Dendritic cell treated with granulocyte-macrophage colony-stimulating factor and Interleukin-4, amounts not matched to agents 40 ng/mL and 50 ng/mL, for 4 days (primary cell): ENCODE measurements at regions of chr16 and their contacts with region 1.

Region 1: GRCh38 chr16:88591577-88592021 is 21.4 kb downstream of the ZC3H18 start:
- H3K4me3 Mint-ChIP-seq: peak overlapping the region; percentile 15
- H3K27ac Mint-ChIP-seq: peak overlapping the region; percentile 81
- H3K4me1 Mint-ChIP-seq: peaks cover 38% of the 10 kb centered on the region
- H3K27me3 Mint-ChIP-seq: no peaks in the 10 kb centered on the region

Region 2: DNA sequence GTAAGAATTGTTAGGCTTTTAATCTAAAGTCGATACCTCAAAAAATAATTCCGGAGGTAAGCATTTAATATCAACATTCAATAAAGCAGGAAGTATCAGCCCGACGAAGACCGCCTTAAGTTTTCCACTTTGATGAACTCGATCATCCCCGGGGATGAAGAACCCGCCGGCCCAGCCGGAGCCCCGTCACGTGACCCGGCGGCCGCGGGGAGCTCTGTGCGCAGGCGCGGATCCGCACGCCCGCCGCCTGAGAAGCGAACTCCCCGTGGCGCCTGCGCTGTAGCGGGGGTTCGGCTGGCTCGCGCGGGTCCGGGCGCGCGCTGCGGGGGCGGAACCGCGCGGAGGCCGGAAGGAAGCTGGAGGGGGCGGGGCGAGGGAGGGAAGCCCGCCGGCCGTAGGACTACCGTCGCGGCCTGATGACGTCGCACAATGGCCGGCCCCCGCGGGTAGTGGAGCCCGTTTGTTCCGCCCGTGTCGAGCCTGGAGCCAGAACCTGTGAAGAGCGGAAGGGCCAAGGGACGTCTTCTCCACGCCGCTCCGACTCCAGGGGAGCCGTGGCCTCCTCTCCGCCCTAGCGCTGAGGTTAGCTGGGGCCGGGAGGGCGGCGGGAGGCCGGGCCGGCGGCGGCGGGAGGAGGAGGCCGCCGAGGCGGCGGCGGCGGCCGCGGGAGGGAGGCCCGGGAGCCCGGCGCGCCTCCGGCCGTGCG is 21.5 kb before region 1 on chr16 and contains the start of gene ZC3H18:
- intact Hi-C with region 1: loop called (anchors 1 kb)
- H3K4me3 Mint-ChIP-seq: peak within 1 kb of the TSS; percentile 80
- H3K27ac Mint-ChIP-seq: peak within 1 kb of the TSS; percentile 84
- H3K4me1 Mint-ChIP-seq: peaks cover 35% of the 10 kb centered on the region
- H3K27me3 Mint-ChIP-seq: peaks cover 1% of the 10 kb centered on the region

Region 3: GRCh38 chr16:88662843-88663606 is 71.4 kb after region 1 on chr16 and contains the start of gene MVD:
- intact Hi-C with region 1: loop called (anchors 1 kb)
- H3K4me3 Mint-ChIP-seq: peak within 1 kb of the TSS; percentile 94
- H3K27ac Mint-ChIP-seq: peak within 1 kb of the TSS; percentile 94
- H3K4me1 Mint-ChIP-seq: peaks cover 35% of the 10 kb centered on the region
- H3K27me3 Mint-ChIP-seq: peaks cover 2% of the 10 kb centered on the region

Region 4: DNA sequence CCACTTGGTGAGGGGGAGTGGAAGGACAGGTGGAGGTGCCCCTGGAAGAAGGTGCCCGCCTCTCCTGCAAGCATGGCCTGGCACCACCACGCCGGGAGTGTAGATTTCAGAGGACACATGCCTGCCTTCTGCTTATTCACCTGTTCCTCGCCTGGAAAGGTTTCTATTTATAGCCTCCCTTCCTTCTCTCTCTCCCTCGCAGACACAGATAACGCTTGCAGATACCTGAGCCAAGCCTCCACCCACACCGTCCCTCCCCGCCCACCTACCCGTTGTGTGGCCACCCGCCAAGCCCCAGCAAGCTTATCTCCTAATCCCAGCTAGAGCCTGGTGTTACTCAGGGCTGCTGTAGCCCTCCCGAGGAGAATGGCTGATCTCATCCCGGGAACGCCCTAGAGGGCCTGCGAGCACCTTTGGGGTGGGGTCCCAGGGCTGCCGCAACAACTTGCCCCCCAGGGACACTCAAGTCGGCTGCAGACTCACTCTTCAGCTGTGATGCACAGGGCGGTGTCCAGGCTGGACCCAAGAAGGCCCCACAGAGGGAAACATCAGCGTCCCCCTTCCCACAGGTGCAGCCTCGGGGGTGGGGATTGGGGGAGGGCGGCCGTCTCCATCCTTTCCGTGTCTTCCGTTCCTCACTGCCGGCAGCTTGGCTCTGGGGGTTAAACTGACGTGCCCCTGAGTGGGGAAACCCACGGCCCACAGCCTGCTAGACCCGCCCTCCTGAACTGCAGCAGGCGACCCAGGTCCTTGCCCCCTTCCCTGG is 96.6 kb after region 1 on chr16:
- intact Hi-C with region 1: no loop called
- H3K4me3 Mint-ChIP-seq: no peak overlapping the region
- H3K27ac Mint-ChIP-seq: peak overlapping the region; percentile 98
- H3K4me1 Mint-ChIP-seq: peaks cover 82% of the 10 kb centered on the region
- H3K27me3 Mint-ChIP-seq: peaks cover 7% of the 10 kb centered on the region

Region 5: GRCh38 chr16:88706288-88706964 is 114.8 kb after region 1 on chr16 and contains the starts of genes CTU2 and RNF166:
- intact Hi-C with region 1: loop called (anchors 10 kb)
- H3K4me3 Mint-ChIP-seq: peak within 1 kb of the TSS; percentile 93
- H3K27ac Mint-ChIP-seq: peak within 1 kb of the TSS; percentile 89
- H3K4me1 Mint-ChIP-seq: peaks cover 65% of the 10 kb centered on the region
- H3K27me3 Mint-ChIP-seq: no peaks in the 10 kb centered on the region